Ovary (tissue), 10 donors: ENCODE measurements at regions of chr1 and their contacts with region 1.

Region 1: DNA sequence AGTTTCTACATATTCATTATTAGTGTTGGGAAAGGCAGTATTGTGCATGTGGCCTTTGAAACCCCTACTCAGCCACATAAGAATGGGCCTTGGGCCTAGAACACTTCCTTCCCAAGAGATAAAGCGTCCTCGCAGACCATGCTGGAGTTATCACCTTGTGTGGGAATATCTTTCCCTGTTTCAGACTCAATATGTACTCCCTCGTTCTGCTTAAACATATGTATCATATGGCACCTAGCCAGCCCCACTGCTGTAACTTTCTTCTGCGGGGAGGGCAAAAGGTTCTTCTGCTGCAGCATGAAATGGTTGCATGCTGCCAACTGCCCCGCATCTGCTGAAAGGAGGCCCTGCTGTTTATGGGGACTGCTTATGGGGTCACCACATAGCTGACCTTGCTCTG is 92.0 kb downstream of the CRB1 start:
- DNase-seq: peak in 3 of 5 donors; percentile 29 to 57 (median 32)
- H3K4me3 ChIP-seq: no peak overlapping the region
- H3K27ac ChIP-seq: no peak overlapping the region
- H3K4me1 ChIP-seq: peaks cover 3% of the 10 kb centered on the region
- H3K27me3 ChIP-seq: no peaks in the 10 kb centered on the region
- CTCF ChIP-seq: no peak
- EP300 ChIP-seq: no peak
- POLR2A ChIP-seq: no peak

Region 2: GRCh38 chr1:195472291-195472690 is 1887.8 kb before region 1 on chr1:
- intact Hi-C with region 1: loop called in 1 of 4 experiments (anchors 10 kb)
- DNase-seq: no peak
- H3K4me3 ChIP-seq: no peak overlapping the region
- H3K27ac ChIP-seq: no peak overlapping the region
- H3K4me1 ChIP-seq: no peaks in the 10 kb centered on the region
- H3K27me3 ChIP-seq: no peaks in the 10 kb centered on the region
- CTCF ChIP-seq: no peak
- EP300 ChIP-seq: no peak
- POLR2A ChIP-seq: no peak

Region 3: GRCh38 chr1:197200272-197200899 is 159.7 kb before region 1 on chr1:
- intact Hi-C with region 1: no loop called
- DNase-seq: no peak
- H3K4me3 ChIP-seq: peak overlapping the region; percentile 51
- H3K27ac ChIP-seq: peak overlapping the region; percentile 85 to 94
- H3K4me1 ChIP-seq: peaks cover 2% of the 10 kb centered on the region
- H3K27me3 ChIP-seq: no peaks in the 10 kb centered on the region
- CTCF ChIP-seq: no peak
- EP300 ChIP-seq: no peak
- POLR2A ChIP-seq: no peak

Region 4: DNA sequence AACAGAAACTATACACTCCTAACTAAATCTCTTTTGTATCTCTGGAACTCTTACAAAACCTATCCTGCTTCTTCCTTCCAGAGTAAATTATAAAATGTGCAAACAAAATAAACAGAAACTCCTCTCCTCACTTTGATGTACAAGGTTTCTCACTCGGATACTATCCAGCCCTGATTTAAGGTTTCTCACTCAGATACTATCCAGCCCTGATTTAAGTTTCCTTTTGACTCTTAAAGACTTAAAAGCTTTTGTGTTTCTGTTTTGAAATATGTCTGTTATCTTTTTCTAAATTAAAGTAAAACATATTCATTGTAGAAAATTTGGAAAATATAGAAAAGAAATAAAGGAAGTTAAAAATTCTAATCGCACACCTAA is 40.4 kb after region 1 on chr1:
- intact Hi-C with region 1: no loop called
- DNase-seq: no peak
- H3K4me3 ChIP-seq: no peak overlapping the region
- H3K27ac ChIP-seq: no peak overlapping the region
- H3K4me1 ChIP-seq: no peaks in the 10 kb centered on the region
- H3K27me3 ChIP-seq: no peaks in the 10 kb centered on the region
- CTCF ChIP-seq: no peak
- EP300 ChIP-seq: no peak
- POLR2A ChIP-seq: no peak

Region 5: GRCh38 chr1:197496722-197497121 is 136.7 kb after region 1 on chr1:
- intact Hi-C with region 1: no loop called
- DNase-seq: no peak
- H3K4me3 ChIP-seq: no peak overlapping the region
- H3K27ac ChIP-seq: no peak overlapping the region
- H3K4me1 ChIP-seq: no peaks in the 10 kb centered on the region
- H3K27me3 ChIP-seq: no peaks in the 10 kb centered on the region
- CTCF ChIP-seq: no peak
- EP300 ChIP-seq: no peak
- POLR2A ChIP-seq: no peak